Esophagus muscularis mucosa (tissue), 4 donors: ENCODE measurements at regions of chr12 and their contacts with region 1.

Region 1: GRCh38 chr12:21501379-21501956 is at the starts of genes GOLT1B and RECQL:
- DNase-seq: peak; percentile 99
- H3K4me3 ChIP-seq: peak within 1 kb of the TSS; percentile 76 to 96 (median 86)
- H3K27ac ChIP-seq: peak within 1 kb of the TSS; percentile 82 to 93 (median 86)
- H3K4me1 ChIP-seq: peaks cover 27 to 58% (median 43%) of the 10 kb centered on the region in 4 donors
- H3K27me3 ChIP-seq: no peaks in the 10 kb centered on the region
- CTCF ChIP-seq: no peak
- EP300 ChIP-seq: no peak
- POLR2A ChIP-seq: peak; percentile 31
- total RNA-seq, gene GOLT1B: 11.8 to 24.7 (median 21.6) TPM
- total RNA-seq, gene RECQL: 36.4 to 45.0 (median 42.2) TPM

Region 2: GRCh38 chr12:21305661-21306060 is 195.8 kb before region 1 on chr12:
- intact Hi-C with region 1: no loop called
- DNase-seq: no peak
- H3K4me3 ChIP-seq: no peak overlapping the region
- H3K27ac ChIP-seq: no peak overlapping the region
- H3K4me1 ChIP-seq: no peaks in the 10 kb centered on the region
- H3K27me3 ChIP-seq: no peaks in the 10 kb centered on the region
- CTCF ChIP-seq: no peak
- EP300 ChIP-seq: no peak
- POLR2A ChIP-seq: no peak

Region 3: GRCh38 chr12:21657326-21658077 is 156.0 kb after region 1 on chr12 and contains the start of gene LDHB:
- intact Hi-C with region 1: loop called (anchors 5 kb)
- DNase-seq: peak; percentile 98
- H3K4me3 ChIP-seq: peak within 1 kb of the TSS; percentile 83 to 90 (median 88)
- H3K27ac ChIP-seq: peak within 1 kb of the TSS; percentile 95 to 98 (median 95)
- H3K4me1 ChIP-seq: peaks cover 15 to 44% (median 33%) of the 10 kb centered on the region in 4 donors
- H3K27me3 ChIP-seq: no peaks in the 10 kb centered on the region
- CTCF ChIP-seq: no peak
- EP300 ChIP-seq: no peak
- POLR2A ChIP-seq: peak; percentile 79
- total RNA-seq, gene LDHB: 299 to 433 (median 374) TPM

Region 4: GRCh38 chr12:21683115-21683514 is 181.6 kb after region 1 on chr12:
- intact Hi-C with region 1: loop called (anchors 5 kb)
- DNase-seq: no peak
- H3K4me3 ChIP-seq: no peak overlapping the region
- H3K27ac ChIP-seq: no peak overlapping the region
- H3K4me1 ChIP-seq: peaks cover 5 to 10% (median 6%) of the 10 kb centered on the region in 4 donors
- H3K27me3 ChIP-seq: no peaks in the 10 kb centered on the region
- CTCF ChIP-seq: no peak
- EP300 ChIP-seq: no peak
- POLR2A ChIP-seq: no peak